Naive thymus-derived CD4-positive, alpha-beta T cell (primary cell): ENCODE measurements at regions of chr7 and their contacts with region 1.

Region 1: DNA sequence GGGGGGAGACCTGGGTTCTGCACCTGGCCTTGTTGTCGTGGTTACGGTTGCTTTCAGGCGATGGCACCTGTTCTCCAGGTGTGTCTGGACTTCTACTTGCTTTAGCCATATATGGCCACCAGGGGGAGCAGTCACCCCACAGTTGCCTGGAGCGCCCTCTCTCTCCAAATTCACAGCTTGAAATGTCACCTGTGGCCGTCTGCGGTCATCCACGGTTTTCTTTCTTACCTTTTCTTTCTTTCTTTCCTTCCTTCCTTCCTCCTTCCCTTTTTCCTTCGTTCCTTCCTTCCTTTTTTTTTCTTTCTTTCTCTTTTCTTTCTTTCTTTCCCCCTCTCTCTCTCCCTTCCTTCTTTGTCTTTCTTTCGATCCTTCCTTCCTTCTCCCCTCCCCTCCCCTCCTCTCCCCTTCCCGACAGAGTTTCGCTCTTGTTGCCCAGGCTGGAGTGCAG is 150.5 kb upstream of the VKORC1L1 start:
- DNase-seq: peak; percentile 47 to 75 (median 67)
- ATAC-seq: peak; percentile 93
- H3K4me3 ChIP-seq: no peak overlapping the region
- H3K4me3 Mint-ChIP-seq: peak overlapping the region in 3 of 10 donors; percentile 15 to 56 (median 25)
- H3K27ac ChIP-seq: no peak overlapping the region
- H3K27ac Mint-ChIP-seq: peak overlapping the region in 1 of 9 donors; percentile 47
- H3K4me1 ChIP-seq: no peaks in the 10 kb centered on the region
- H3K4me1 Mint-ChIP-seq: peaks cover 0 to 5% (median 0%) of the 10 kb centered on the region in 7 donors
- H3K27me3 ChIP-seq: no peaks in the 10 kb centered on the region
- H3K27me3 Mint-ChIP-seq: no peaks in the 10 kb centered on the region

Region 2: DNA sequence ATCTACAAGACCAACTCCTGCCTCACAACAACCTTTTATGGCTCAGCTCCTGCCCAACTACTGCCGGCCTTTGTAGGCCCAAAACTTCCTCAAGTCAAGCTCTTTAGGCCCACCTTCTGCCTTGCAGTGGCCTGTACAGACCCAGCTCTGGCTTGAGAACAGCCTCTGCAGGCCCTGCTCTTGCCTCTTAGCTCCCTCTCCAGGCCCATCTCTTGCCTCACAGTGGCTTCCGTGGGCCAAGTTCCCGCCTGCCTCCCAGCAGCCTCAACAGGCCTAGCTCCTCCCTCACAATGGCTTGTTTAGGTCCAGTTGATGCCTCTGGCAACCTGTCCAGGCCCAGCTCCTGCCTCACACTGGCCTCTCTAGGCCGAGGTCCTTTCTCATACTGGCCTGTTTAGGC is 118.1 kb after region 1 on chr7:
- CTCF ChIA-PET with region 1: interaction called, 4 read pairs
- POLR2A ChIA-PET with region 1: no interaction called
- intact Hi-C with region 1: loop called in 1 of 2 experiments (anchors 1 kb)
- DNase-seq: no peak
- ATAC-seq: peak; percentile 53
- H3K4me3 ChIP-seq: no peak overlapping the region
- H3K4me3 Mint-ChIP-seq: no peak overlapping the region
- H3K27ac ChIP-seq: no peak overlapping the region
- H3K27ac Mint-ChIP-seq: peak overlapping the region in 1 of 9 donors; percentile 61
- H3K4me1 ChIP-seq: no peaks in the 10 kb centered on the region
- H3K4me1 Mint-ChIP-seq: peaks cover 0 to 3% (median 2%) of the 10 kb centered on the region in 7 donors
- H3K27me3 ChIP-seq: no peaks in the 10 kb centered on the region
- H3K27me3 Mint-ChIP-seq: no peaks in the 10 kb centered on the region

Region 3: GRCh38 chr7:65960351-65961074 is 238.1 kb after region 1 on chr7:
- CTCF ChIA-PET with region 1: no interaction called
- POLR2A ChIA-PET with region 1: no interaction called
- intact Hi-C with region 1: loop called in 1 of 2 experiments (anchors 1 kb)
- DNase-seq: no peak
- ATAC-seq: no peak
- H3K4me3 ChIP-seq: no peak overlapping the region
- H3K4me3 Mint-ChIP-seq: no peak overlapping the region
- H3K27ac ChIP-seq: no peak overlapping the region
- H3K27ac Mint-ChIP-seq: no peak overlapping the region
- H3K4me1 ChIP-seq: no peaks in the 10 kb centered on the region
- H3K4me1 Mint-ChIP-seq: peaks cover 0 to 6% (median 0%) of the 10 kb centered on the region in 7 donors
- H3K27me3 ChIP-seq: no peaks in the 10 kb centered on the region
- H3K27me3 Mint-ChIP-seq: no peaks in the 10 kb centered on the region